Spleen (tissue), 13 donors: ENCODE measurements at regions of chr9 and their contacts with region 1.

Region 1: GRCh38 chr9:132973713-132974112 is 4.8 kb upstream of the GFI1B start:
- DNase-seq: no peak
- H3K4me3 ChIP-seq: no peak overlapping the region
- H3K27ac ChIP-seq: no peak overlapping the region
- H3K4me1 ChIP-seq: peaks cover 0 to 25% (median 19%) of the 10 kb centered on the region in 6 donors
- H3K27me3 ChIP-seq: peaks cover 0 to 62% (median 3%) of the 10 kb centered on the region in 7 donors
- CTCF ChIP-seq: no peak
- POLR2A ChIP-seq: no peak

Region 2: GRCh38 chr9:133023117-133023890 is 49.6 kb after region 1 on chr9:
- intact Hi-C with region 1: loop called (anchors 10 kb)
- DNase-seq: no peak
- H3K4me3 ChIP-seq: no peak overlapping the region
- H3K27ac ChIP-seq: no peak overlapping the region
- H3K4me1 ChIP-seq: peaks cover 0 to 25% (median 13%) of the 10 kb centered on the region in 6 donors
- H3K27me3 ChIP-seq: no peaks in the 10 kb centered on the region
- CTCF ChIP-seq: no peak
- POLR2A ChIP-seq: no peak